Psoas muscle (tissue), 8 donors: ENCODE measurements at regions of chr16 and their contacts with region 1.

Region 1: GRCh38 chr16:2874912-2875362 is 8.1 kb upstream of the FLYWCH2 start:
- DNase-seq: peak; percentile 78 to 90
- ATAC-seq: peak; percentile 97 to 98 (median 98)
- H3K4me3 ChIP-seq: peak overlapping the region; percentile 22
- H3K27ac ChIP-seq: no peak overlapping the region
- H3K4me1 ChIP-seq: peaks cover 24% of the 10 kb centered on the region
- H3K27me3 ChIP-seq: no peaks in the 10 kb centered on the region
- CTCF ChIP-seq: peak; percentile 93

Region 2: GRCh38 chr16:2919511-2920255 is 44.7 kb after region 1 on chr16:
- intact Hi-C with region 1: loop called (anchors 2 to 5 kb)
- DNase-seq: peak; percentile 43 to 76
- ATAC-seq: peak; percentile 60 to 87 (median 76)
- H3K4me3 ChIP-seq: no peak overlapping the region
- H3K27ac ChIP-seq: peak overlapping the region; percentile 57
- H3K4me1 ChIP-seq: peaks cover 12% of the 10 kb centered on the region
- H3K27me3 ChIP-seq: no peaks in the 10 kb centered on the region
- CTCF ChIP-seq: peak; percentile 95

Region 3: DNA sequence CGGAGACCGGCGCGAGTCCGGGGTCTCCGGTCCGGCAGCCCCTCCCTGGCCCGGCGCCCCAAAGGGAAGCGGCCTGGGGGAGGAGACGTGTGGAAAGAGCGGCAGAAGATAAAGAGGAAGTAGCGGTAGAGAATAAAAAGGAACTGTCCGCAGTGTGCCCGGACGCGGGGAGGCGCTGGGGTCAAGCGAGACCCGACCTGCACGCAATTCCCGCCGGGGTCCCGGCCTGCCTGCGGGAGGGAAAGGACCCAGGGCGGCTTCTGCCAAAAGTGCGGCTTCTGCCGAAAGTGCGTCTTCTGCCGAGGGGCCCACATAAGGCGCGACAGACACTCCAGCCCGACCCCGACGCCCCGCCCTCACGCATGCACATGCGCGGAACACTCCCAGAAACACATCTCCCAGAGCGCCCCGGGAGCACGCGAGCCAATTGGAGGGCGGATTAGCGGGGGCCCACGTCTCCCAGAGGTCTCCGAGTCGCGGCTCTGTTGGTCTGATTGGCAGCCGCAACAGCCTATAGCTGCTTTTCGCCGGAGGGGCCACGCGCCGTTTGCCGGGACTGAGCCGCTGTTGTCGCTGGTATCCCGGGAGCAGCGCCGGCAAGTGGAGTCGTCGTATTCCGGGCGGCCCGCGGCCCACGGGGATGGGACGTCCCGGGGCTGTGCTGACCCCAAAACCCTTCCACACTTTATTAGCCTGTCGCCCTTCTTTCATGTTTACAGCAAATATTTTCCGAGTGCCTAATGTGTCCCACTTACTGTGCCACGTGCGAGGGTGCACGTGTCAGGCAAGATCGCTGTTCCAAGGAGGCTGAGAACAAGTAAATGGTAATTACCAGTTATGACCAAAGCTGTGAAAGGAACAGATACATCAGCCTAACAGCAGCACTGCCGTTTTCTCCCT is 389.4 kb after region 1 on chr16:
- intact Hi-C with region 1: no loop called
- DNase-seq: peak; percentile 98
- ATAC-seq: peak; percentile 97 to 98 (median 97)
- H3K4me3 ChIP-seq: peak overlapping the region; percentile 80
- H3K27ac ChIP-seq: peak overlapping the region; percentile 95
- H3K4me1 ChIP-seq: peaks cover 3% of the 10 kb centered on the region
- H3K27me3 ChIP-seq: no peaks in the 10 kb centered on the region
- CTCF ChIP-seq: peak; percentile 5